Activated naive CD8-positive, alpha-beta T cell treated with anti-CD3 and anti-CD28 coated beads, Interleukin-2, amount 10 ng/mL, durations not matched to agents 7 days and 5 days (primary cell): ENCODE measurements at regions of chr9 and their contacts with region 1.

Region 1: DNA sequence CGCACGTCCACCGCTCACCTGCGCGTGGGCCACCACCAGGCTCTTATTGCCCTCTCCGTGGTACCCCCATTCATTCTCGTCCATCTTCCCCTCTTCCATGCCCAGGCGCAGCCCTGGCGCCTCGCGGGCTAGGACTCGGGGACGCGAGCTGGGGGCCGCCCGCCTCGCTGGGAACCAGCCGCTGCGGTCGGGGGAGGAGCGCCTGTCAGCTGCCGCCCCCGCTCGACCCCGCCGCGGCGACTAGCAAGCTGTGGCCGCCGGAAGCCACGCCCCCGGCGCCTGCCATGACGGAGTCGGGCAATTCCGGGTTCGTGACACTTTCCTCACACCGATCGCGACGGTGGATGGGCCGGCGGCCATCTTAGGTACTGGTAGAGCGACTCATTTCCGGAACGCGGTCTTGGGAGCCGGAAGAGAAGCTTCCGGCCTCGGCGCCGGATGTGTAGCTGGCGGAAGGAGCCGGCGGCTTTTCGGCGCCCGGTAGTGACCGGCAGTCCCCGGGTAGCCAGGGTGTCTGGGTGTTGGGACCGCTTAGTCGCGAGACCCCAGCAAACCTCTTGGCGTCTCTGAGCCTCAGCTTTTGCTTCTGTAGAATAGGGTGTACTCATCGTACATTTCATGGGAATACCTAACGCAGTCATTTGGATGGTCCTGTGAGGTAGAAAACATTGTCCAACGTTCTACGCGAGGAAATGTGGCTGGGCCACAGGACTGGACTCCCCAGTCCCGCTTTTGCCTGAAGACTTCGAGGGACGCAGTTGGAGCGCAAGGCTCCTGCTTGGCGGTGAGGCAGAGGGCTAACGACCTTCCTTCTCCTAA is at the start of gene IPPK:
- DNase-seq: peak; percentile 98
- ATAC-seq: peak; percentile 94
- H3K4me3 Mint-ChIP-seq: peak within 1 kb of the TSS; percentile 89
- H3K27ac Mint-ChIP-seq: peak within 1 kb of the TSS; percentile 92
- H3K4me1 Mint-ChIP-seq: peaks cover 31% of the 10 kb centered on the region
- H3K27me3 Mint-ChIP-seq: no peaks in the 10 kb centered on the region
- total RNA-seq, gene IPPK: 9.4 to 9.7 TPM

Region 2: GRCh38 chr9:92325269-92325990 is 344.7 kb before region 1 on chr9 and contains the starts of genes CENPP and NOL8:
- POLR2A ChIA-PET with region 1: interaction called, 17 read pairs
- DNase-seq: peak; percentile 85
- ATAC-seq: peak; percentile 95
- H3K4me3 Mint-ChIP-seq: peak within 1 kb of the TSS; percentile 99
- H3K27ac Mint-ChIP-seq: peak within 1 kb of the TSS; percentile 98
- H3K4me1 Mint-ChIP-seq: peaks cover 30% of the 10 kb centered on the region
- H3K27me3 Mint-ChIP-seq: no peaks in the 10 kb centered on the region
- total RNA-seq, gene CENPP: 19.6 to 20.6 TPM
- total RNA-seq, gene NOL8: 65.6 to 69.2 TPM

Region 3: DNA sequence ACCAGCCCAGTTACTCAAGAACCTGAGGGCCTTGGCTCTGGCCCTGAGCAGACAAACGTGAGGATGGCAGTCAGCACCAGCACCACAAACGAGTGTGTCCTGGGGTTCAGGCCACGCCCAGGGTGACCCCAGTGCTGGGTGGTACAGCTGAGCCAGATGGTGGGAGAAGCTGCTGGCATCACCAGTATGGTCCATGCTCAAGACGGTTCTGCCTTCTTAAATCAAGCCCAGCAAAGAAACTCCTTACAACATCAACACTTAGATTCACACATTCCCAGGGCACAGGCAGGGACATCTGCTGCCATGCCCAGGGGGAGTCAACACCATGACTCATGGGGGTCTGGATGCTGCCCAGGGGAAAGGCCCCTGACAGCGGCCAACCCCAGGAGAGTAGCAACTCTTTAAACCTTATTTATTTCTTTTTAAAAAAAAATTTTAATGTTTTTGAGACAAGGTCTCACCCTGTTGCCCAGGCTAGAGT is 31.4 kb before region 1 on chr9:
- POLR2A ChIA-PET with region 1: no interaction called
- DNase-seq: no peak
- ATAC-seq: no peak
- H3K4me3 Mint-ChIP-seq: no peak overlapping the region
- H3K27ac Mint-ChIP-seq: no peak overlapping the region
- H3K4me1 Mint-ChIP-seq: no peaks in the 10 kb centered on the region
- H3K27me3 Mint-ChIP-seq: no peaks in the 10 kb centered on the region

Region 4: DNA sequence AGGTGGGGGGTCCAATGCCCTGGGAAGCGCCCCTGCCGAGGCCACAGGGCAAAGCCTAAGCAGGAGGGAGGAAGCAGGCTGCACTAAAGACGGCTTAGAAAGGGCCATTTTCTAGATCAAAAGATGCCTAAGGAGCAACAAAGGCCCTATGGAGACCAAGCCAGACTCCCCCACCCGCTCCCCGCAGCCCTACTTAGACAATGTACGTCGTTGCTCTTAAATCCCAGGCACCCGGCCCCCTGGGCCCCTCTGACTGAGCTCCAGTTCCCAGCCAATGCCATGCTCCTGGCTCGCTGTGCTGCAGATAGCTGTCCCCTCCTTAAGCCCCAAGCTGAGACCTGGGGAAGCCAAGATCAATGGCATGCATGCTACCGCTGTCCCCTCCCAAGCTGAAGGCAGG is 10.5 kb before region 1 on chr9:
- POLR2A ChIA-PET with region 1: no interaction called
- DNase-seq: no peak
- ATAC-seq: no peak
- H3K4me3 Mint-ChIP-seq: no peak overlapping the region
- H3K27ac Mint-ChIP-seq: no peak overlapping the region
- H3K4me1 Mint-ChIP-seq: peaks cover 15% of the 10 kb centered on the region
- H3K27me3 Mint-ChIP-seq: no peaks in the 10 kb centered on the region

Region 5: DNA sequence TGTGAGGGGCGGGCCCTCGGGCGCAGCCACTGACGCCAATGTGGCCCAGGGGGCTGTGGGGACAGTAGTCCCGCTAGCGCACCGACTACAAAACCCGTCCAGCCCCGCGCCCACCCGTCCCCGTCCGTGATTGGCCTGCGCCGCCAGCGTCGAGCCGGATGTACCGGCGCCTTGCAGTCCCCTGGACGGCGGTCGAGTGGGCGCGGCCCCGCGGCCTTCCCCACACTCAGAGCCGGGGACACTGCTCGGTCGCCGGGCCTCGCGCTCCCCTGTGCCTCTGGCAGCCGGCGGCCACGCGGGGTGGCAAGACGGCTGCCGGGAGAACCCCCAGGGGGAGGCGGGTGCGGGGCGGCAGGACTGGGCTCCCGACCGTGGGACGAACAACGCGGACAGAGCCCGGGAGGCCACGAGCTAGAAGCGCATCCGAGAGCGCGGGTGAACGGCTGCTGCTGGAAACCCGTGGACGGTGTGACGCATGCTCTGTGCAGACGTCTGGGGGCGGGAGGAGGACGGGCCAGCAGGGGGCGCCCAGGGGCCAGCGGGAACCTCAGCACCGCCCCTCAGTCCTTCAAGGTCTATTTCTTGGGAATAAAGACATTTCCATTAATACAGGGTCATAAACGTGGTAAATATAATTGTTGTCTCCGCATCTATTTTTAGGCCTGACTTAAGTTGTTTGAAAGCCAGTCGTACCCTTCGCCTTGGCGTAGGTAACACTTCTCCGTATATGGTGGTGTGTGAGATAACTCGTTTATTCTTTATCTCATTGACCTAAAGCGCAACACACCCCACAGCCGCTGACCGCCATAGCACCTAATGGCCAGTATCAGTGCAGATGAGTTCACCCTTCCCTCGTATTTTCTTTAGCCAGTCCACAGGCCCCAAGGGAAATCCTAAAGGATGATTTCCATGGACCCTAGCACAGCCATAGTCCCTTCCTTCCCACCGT is 95.2 kb after region 1 on chr9:
- POLR2A ChIA-PET with region 1: interaction called, 13 read pairs
- DNase-seq: peak; percentile 98
- ATAC-seq: peak; percentile 94
- H3K4me3 Mint-ChIP-seq: peak overlapping the region; percentile 84
- H3K27ac Mint-ChIP-seq: peak overlapping the region; percentile 91
- H3K4me1 Mint-ChIP-seq: peaks cover 41% of the 10 kb centered on the region
- H3K27me3 Mint-ChIP-seq: no peaks in the 10 kb centered on the region

Region 6: GRCh38 chr9:92829420-92829819 is 159.3 kb after region 1 on chr9:
- POLR2A ChIA-PET with region 1: no interaction called
- DNase-seq: no peak
- ATAC-seq: no peak
- H3K4me3 Mint-ChIP-seq: no peak overlapping the region
- H3K27ac Mint-ChIP-seq: no peak overlapping the region
- H3K4me1 Mint-ChIP-seq: no peaks in the 10 kb centered on the region
- H3K27me3 Mint-ChIP-seq: peaks cover 5% of the 10 kb centered on the region